A673 (cell line): ENCODE measurements at regions of chr11 and their contacts with region 1.

Region 1: DNA sequence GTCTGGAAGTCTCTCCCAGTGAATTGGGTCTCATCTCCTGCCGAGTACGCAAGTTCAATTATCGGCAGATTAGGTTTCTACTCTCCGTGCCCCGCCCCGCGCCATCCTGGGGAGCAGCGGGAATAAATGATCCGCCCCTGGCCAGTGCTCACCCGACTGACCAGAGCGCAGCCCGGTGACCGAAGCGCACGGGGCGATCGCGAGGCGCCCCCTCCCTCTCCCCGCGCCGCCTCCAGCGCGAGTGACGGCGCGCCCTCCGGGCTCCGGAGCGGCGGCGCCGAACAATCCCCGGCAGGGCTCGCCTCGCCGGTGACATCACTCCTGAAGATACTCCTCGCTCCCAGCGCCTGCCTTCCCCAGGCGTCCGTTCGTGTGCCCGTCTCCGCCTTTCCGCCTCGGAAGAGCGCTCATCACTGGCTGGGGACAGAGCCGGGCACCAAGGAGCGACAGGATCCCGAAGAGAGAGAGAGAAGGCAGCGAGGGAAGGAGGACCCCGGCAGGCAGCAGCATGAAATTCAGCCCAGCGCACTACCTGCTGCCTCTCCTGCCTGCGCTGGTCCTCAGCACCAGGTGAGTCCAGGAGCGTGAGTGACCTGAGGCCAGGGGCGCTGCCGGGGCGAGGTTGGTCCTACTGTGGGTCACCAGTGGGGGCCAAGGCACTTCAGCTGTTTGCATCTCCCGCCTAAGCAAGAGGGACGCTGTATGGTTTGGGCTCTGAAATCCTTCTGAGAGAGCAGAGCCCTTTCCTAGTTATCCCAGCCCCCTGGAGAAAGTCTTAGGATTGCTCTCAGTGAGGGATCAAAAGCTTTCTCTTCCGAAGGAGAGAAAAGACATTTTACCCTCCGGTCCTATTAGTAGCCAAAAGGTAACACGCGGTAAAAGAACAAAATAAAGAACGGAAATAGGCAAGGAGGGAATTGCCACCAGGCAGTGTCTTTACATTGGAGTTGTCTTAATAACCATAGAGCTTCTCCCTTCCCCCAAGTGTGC is at the start of gene LUZP2:
- DNase-seq: peak; percentile 47
- H3K4me3 ChIP-seq: peak within 1 kb of the TSS; percentile 48
- H3K27ac ChIP-seq: no peak within 1 kb of the TSS
- H3K4me1 ChIP-seq: no peaks in the 10 kb centered on the region
- H3K27me3 ChIP-seq: peaks cover 26% of the 10 kb centered on the region
- CTCF ChIP-seq: no peak
- total RNA-seq, gene LUZP2: 0.15 and 0.17 TPM in 2 replicates

Region 2: DNA sequence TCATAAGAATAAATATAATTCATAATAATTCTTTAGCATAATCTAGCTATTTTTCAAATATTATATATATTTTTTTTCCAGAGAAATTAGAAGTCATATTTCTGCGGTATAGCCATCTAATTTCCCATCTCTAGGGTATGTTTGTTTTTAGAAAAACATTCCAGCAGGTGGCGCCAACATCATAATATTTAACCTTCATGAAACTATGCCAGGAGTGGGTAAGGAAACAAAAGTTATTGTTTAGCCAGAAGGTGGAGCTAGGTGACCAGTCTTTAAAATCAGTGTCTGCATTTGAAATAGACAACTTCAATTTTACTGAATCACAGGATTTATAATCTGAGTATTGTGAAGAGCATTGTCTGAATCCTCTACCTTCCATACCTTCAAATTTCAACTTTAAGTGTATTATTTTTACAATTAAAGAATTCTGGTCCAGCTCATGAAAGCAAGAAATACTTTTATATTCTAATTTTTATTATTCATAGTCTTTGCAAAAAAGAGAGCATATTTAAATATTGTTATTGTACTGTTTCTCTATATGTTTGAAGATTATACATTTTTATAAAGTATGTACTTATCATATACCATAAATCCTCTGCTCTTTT is 1621.1 kb before region 1 on chr11:
- CTCF ChIA-PET with region 1: no interaction called
- POLR2A ChIA-PET with region 1: no interaction called
- intact Hi-C with region 1: loop called (anchors 5 kb)
- DNase-seq: peak; percentile 84
- H3K4me3 ChIP-seq: no peak overlapping the region
- H3K27ac ChIP-seq: no peak overlapping the region
- H3K4me1 ChIP-seq: no peaks in the 10 kb centered on the region
- H3K27me3 ChIP-seq: no peaks in the 10 kb centered on the region
- CTCF ChIP-seq: peak; percentile 78

Region 3: DNA sequence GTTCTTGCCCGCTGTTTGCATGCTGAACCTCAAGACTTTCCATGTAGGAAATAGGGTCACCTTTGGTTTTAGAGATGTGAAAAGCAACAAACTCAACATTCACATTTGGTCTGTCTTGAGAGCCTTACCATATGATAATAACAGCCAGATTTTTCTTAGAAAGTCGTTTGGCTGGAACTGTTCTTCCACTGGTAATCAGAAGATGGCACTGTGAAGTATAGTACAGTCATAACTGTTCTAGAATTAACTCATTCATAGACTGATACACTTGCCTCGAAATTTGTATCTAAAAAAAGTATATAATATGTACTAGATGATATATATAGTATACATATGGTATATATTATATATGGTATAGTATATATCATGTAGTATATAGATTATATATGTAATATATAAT is 12.1 kb after region 1 on chr11:
- CTCF ChIA-PET with region 1: no interaction called
- POLR2A ChIA-PET with region 1: interaction called, 17 read pairs
- intact Hi-C with region 1: no loop called
- DNase-seq: peak; percentile 6
- H3K4me3 ChIP-seq: no peak overlapping the region
- H3K27ac ChIP-seq: no peak overlapping the region
- H3K4me1 ChIP-seq: no peaks in the 10 kb centered on the region
- H3K27me3 ChIP-seq: no peaks in the 10 kb centered on the region
- CTCF ChIP-seq: peak; percentile 42; the same call in 1 of the 2 replicates